Breast epithelium (tissue), 4 donors: ENCODE measurements at regions of chr12 and their contacts with region 1.

Region 1: GRCh38 chr12:43648636-43649035 is 96.6 kb upstream of the ADAMTS20 start:
- DNase-seq: no peak
- H3K4me3 ChIP-seq: no peak overlapping the region
- H3K27ac ChIP-seq: no peak overlapping the region
- H3K4me1 ChIP-seq: no peaks in the 10 kb centered on the region
- H3K27me3 ChIP-seq: no peaks in the 10 kb centered on the region
- CTCF ChIP-seq: no peak
- POLR2A ChIP-seq: no peak

Region 2: GRCh38 chr12:43728117-43728516 is 79.5 kb after region 1 on chr12:
- intact Hi-C with region 1: no loop called
- DNase-seq: no peak
- H3K4me3 ChIP-seq: no peak overlapping the region
- H3K27ac ChIP-seq: no peak overlapping the region
- H3K4me1 ChIP-seq: no peaks in the 10 kb centered on the region
- H3K27me3 ChIP-seq: no peaks in the 10 kb centered on the region
- CTCF ChIP-seq: no peak
- POLR2A ChIP-seq: no peak

Region 3: GRCh38 chr12:43921666-43922337 is 273.2 kb after region 1 on chr12:
- intact Hi-C with region 1: no loop called
- DNase-seq: no peak
- H3K4me3 ChIP-seq: no peak overlapping the region
- H3K27ac ChIP-seq: no peak overlapping the region
- H3K4me1 ChIP-seq: no peaks in the 10 kb centered on the region
- H3K27me3 ChIP-seq: no peaks in the 10 kb centered on the region
- CTCF ChIP-seq: no peak
- POLR2A ChIP-seq: no peak

Region 4: DNA sequence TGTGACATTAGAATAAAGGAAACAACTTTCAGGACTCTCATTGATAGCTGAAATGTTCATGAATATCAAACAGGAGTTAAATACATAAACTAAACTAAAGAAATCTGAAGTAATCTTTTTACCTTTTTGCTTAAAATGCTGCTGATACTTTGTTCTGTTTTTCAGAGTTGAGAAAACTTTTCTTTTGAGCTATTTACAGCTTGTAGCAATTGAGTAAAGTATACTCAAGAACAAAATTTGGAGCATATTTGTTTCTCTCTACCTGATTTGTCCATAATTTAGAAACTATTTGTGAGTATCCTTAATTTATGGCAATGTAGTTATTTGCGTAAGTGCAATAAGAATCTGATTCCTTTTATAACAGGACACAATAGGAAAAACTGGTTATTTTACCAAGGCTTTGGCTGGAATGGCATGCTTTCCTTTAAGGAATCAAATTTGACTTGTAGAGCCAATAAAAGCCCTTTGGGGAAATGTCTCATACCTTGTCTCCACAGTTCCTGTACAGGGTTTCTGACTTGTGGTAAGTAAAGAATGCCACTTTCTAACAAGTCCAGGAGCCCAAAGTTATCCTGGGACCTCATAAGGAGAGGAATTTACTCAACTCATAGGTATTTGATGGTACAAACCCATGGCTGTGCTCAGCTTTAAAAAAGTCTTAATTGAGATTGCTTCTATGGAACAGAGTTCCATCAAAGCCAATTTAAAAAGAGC is 383.0 kb after region 1 on chr12:
- intact Hi-C with region 1: loop called (anchors 10 kb)
- DNase-seq: no peak
- H3K4me3 ChIP-seq: no peak overlapping the region
- H3K27ac ChIP-seq: no peak overlapping the region
- H3K4me1 ChIP-seq: no peaks in the 10 kb centered on the region
- H3K27me3 ChIP-seq: no peaks in the 10 kb centered on the region
- CTCF ChIP-seq: no peak
- POLR2A ChIP-seq: no peak